HEK293 (cell line): ENCODE measurements at regions of chr12 and their contacts with region 1.

Region 1: GRCh38 chr12:54379401-54380201 is 4.9 kb downstream of the ZNF385A start:
- H3K4me3 ChIP-seq: peak overlapping the region; percentile 42
- H3K27ac ChIP-seq: no peak overlapping the region; the same call in 1 of the 2 replicates
- H3K4me1 ChIP-seq: peaks cover 6% of the 10 kb centered on the region
- CTCF ChIP-seq: peak; percentile 100

Region 2: DNA sequence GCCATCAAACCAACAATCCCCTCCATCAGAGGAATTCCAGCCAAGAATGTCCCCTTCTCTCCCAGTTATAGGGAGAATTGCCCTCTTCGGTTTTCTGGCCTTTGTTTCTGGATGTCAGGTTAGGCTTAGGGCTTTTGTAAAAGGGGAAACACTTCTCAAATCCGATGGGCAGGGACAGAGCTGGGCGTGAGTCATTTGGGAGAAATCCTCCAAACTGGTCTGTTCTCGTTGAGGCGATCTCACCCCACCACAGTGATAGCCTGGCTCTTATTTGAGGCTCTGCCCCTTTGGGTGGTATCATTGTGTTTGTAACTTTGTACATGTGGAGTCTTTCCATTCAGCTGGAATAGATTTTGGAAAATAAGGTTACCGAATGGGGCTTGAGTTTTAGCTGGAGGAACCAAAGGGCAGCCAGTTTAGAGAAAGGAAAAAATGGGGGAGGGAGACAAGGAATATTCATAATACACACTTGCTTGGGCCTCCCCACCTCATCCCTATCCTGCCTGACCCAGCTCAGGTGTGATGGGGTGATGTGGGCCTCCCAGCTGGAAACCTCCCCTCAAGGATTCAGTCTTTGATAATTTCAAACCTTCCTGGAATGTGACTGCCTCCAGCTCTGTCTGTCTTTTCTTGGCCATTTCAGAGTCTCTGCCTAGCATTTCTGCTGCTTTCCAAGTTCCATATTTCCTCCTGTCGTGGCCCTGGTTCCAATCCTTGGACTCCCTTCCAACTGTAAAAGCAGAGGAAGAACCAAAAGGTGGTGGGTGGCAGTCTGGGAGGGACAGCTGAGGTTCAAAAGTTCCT is 318.4 kb before region 1 on chr12:
- CTCF ChIA-PET with region 1: no interaction called
- POLR2A ChIA-PET with region 1: no interaction called
- H3K4me3 ChIP-seq: no peak overlapping the region
- H3K27ac ChIP-seq: no peak overlapping the region
- H3K4me1 ChIP-seq: peaks cover 36% of the 10 kb centered on the region
- CTCF ChIP-seq: no peak

Region 3: DNA sequence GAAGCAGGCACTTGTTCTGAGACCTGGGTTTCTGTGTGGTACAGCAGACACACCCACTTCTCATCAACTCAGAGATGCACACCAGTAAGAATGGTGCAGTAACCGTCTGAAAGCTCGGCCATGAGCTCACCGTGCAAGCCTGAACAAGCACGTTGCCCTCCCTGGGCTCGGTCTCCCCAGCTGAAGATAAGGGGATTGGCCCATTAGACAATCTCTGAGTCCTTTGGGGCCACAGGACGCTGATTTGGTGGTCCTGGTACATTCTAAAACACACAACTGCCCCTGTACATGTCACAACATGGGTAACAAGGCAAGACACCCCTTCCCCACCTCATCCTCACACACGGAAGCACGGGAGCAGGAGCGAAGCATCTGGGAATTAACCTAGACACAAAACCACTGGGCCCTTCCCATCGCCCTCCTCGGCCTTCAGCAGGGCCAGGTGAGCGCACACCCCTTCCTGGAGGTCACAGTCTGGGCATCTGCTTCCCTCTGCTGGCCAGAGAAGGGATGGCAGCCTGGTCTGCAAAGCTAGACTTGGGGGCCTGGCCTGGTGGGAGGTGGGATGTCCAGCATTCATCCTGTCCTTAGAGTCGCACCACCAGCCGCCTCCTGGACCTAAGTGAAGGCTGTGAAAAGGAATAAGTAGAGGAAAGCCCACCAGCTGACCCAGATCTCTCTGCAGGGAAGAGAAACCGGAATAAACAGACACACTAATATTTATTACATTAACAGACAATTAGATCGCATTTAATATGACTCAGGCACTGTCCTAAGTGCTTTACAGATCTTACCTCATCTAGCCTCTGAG is 171.9 kb before region 1 on chr12:
- CTCF ChIA-PET with region 1: interaction called, 36 read pairs
- POLR2A ChIA-PET with region 1: no interaction called
- H3K4me3 ChIP-seq: no peak overlapping the region
- H3K27ac ChIP-seq: 0 out of 2 replicates have a peak overlapping the region, but pooled peaks have one; percentile 13
- H3K4me1 ChIP-seq: no peaks in the 10 kb centered on the region
- CTCF ChIP-seq: peak; percentile 89

Region 4: GRCh38 chr12:54294152-54294952 is 85.2 kb before region 1 on chr12:
- CTCF ChIA-PET with region 1: interaction called, 11 read pairs
- POLR2A ChIA-PET with region 1: interaction called, 7 read pairs
- H3K4me3 ChIP-seq: no peak overlapping the region
- H3K27ac ChIP-seq: no peak overlapping the region
- H3K4me1 ChIP-seq: no peaks in the 10 kb centered on the region
- CTCF ChIP-seq: peak; percentile 69

Region 5: DNA sequence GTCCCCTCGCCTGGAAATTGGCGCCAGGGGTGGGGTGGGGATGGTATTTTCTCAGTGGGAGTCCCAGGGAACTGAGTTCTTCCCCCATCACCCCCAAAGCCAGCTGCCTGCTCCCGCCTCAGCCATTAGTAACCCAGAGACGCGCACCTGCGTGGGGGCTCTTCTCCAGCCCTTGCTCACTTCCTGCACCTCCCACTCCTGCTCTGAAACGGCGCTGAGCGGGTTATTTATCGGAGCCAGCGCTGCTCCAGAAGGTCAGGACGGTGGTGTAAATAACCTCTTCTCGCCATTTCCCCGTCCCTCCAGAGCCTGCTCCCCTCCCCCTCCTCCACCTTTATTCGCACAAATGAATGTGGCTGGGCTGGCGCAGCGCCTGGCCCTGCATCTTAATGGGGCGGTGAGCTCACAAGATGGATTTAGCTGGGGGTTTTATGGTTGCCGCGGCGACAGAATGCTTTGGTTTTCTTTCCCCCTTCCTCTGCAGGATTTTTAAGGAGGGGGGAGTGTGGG is 27.5 kb before region 1 on chr12:
- CTCF ChIA-PET with region 1: interaction called, 14 read pairs
- POLR2A ChIA-PET with region 1: interaction called, 3 read pairs
- H3K4me3 ChIP-seq: no peak overlapping the region
- H3K27ac ChIP-seq: peak overlapping the region; percentile 71
- H3K4me1 ChIP-seq: peaks cover 18% of the 10 kb centered on the region
- CTCF ChIP-seq: no peak

Region 6: DNA sequence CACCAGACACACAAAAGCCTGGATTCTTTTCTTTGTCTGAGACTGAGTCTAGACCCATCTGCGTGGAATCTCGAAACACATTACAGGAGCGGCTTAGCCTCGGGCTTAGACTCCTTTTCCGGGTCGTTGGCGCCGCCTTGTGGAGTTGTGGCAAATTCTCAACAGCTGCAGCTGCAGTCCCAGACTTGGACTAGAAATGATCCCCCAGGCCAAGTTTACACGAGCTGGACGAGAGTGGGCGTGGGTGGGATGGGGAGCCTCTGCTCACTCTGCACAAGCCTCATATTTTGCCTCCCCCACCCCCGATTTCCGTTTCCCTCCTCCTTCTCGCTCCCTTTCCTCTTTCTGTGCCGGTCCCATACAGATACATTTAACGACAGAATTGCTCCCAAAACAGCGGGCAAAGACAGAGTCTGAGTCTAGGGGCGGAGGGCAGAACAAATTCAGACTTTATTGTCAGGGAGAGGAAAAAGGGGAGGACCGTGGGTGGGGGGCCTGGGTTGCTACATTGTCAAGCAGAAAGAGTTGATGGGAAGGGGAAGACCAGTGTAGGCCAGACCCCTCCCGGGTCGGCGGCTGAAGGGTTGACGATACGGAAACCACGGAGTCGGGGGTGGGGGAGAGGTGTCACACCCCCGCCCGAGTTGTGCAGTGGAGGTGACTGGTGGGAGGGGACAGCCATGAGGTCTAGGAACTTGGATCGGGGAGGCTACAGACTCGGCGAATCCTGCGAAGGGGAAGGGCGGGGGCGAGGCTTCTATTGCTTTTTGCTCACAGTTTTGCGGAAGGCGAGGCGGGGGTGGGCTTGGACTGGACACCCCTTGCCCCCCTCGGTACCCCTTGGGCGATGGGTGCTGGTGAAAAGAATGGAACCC is 10.7 kb before region 1 on chr12:
- CTCF ChIA-PET with region 1: interaction called, 85 read pairs
- POLR2A ChIA-PET with region 1: interaction called, 12 read pairs
- H3K4me3 ChIP-seq: no peak overlapping the region
- H3K27ac ChIP-seq: no peak overlapping the region
- H3K4me1 ChIP-seq: peaks cover 10% of the 10 kb centered on the region
- CTCF ChIP-seq: peak; percentile 79

Region 7: GRCh38 chr12:54398995-54399793 is 19.6 kb after region 1 on chr12:
- CTCF ChIA-PET with region 1: interaction called, 77 read pairs
- POLR2A ChIA-PET with region 1: interaction called, 3 read pairs
- H3K4me3 ChIP-seq: no peak overlapping the region
- H3K27ac ChIP-seq: no peak overlapping the region
- H3K4me1 ChIP-seq: no peaks in the 10 kb centered on the region
- CTCF ChIP-seq: peak; percentile 96

Region 8: DNA sequence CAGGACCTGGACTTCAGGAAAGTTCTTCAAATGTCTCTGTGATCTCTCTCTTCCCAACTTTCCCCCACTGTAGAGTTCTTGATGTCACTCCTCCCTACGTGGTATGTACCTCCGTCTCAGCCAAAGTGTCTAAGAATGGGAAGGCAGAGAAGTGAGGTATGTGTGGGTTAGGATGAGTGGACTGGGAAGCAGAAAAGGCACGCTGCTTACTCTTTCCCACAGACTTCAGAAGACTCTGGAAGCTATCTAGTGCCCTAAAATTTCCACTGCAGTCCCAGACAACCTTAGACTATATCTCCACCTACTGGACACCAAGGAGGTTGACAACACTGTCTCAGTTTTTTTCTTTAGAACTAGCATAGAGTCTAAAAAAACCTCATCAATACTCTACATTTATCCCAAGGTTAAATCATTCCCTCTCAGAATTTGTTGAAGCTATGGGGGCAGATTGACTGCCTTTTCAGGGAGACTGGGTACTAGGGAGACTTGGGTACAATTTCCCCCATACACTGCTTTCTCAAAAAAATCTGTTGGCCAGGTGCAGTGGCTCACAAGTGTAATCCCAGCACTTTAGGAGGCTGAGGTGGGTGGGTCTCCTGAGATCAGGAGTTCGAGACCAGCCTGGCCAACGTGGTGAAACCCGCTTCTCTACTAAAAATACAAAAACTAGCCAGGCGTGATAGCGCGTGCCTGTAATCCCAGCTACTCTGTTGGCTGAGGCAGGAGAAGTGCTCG is 60.1 kb after region 1 on chr12:
- CTCF ChIA-PET with region 1: interaction called, 39 read pairs
- POLR2A ChIA-PET with region 1: no interaction called
- H3K4me3 ChIP-seq: no peak overlapping the region
- H3K27ac ChIP-seq: no peak overlapping the region
- H3K4me1 ChIP-seq: no peaks in the 10 kb centered on the region
- CTCF ChIP-seq: peak; percentile 66